GM12878 (cell line): ENCODE measurements at regions of chr15 and their contacts with region 1.

Region 1: GRCh38 chr15:30770759-30771158 is 133.0 kb upstream of the FAN1 start:
- DNase-seq: no peak
- ATAC-seq: no peak
- H3K4me3 ChIP-seq: no peak overlapping the region
- H3K27ac ChIP-seq: no peak overlapping the region
- H3K4me1 ChIP-seq: no peaks in the 10 kb centered on the region
- H3K27me3 ChIP-seq: no peaks in the 10 kb centered on the region
- CTCF ChIP-seq: no peak
- EP300 ChIP-seq: no peak
- POLR2A ChIP-seq: no peak
- RAD21 ChIP-seq: no peak

Region 2: GRCh38 chr15:30670056-30670455 is 100.7 kb before region 1 on chr15:
- CTCF ChIA-PET with region 1: no interaction called
- POLR2A ChIA-PET with region 1: no interaction called
- RAD21 ChIA-PET with region 1: no interaction called
- SMC1A ChIA-PET with region 1: no interaction called
- in situ Hi-C with region 1: no loop called
- intact Hi-C with region 1: loop called (anchors 10 kb)
- DNase-seq: no peak
- ATAC-seq: no peak
- H3K4me3 ChIP-seq: no peak overlapping the region
- H3K27ac ChIP-seq: no peak overlapping the region
- H3K4me1 ChIP-seq: no peaks in the 10 kb centered on the region
- H3K27me3 ChIP-seq: no peaks in the 10 kb centered on the region
- CTCF ChIP-seq: no peak
- EP300 ChIP-seq: no peak
- POLR2A ChIP-seq: no peak
- RAD21 ChIP-seq: no peak